Activated B cell treated with CpG ODN at 0.5 μM for 24 hours (primary cell): ENCODE measurements at regions of chr4 and their contacts with region 1.

Region 1: DNA sequence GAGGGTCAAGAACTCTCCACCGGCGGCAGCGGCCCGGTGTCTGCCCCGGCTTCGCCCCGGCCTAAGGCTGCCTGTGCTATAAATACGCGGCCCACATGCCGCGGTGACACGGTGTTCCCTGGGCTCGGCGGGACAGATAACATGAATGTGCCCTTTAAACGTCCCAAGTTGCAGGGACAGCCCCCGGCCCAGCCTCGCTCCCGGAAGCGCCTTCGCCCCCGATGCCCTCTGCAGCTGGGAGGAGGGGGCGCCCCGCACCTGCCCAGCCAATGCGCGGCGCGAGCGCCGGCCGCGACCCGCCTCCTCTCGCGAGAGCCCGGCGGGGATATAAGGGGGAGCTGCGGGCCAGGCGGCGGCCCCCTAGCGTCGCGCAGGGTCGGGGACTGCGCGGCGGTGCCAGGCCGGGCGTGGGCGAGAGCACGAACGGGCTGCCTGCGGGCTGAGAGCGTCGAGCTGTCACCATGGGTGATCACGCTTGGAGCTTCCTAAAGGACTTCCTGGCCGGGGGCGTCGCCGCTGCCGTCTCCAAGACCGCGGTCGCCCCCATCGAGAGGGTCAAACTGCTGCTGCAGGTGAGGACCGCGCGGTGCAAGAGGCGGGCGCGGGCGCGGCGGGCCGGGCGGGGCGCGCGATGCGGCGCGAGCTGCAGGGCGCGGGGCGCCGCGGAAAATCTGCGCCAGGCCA is at the start of gene SLC25A4:
- DNase-seq: peak; percentile 92
- ATAC-seq: peak; percentile 97
- H3K4me3 Mint-ChIP-seq: peak within 1 kb of the TSS; percentile 93
- H3K27ac Mint-ChIP-seq: peak within 1 kb of the TSS; percentile 94
- H3K4me1 Mint-ChIP-seq: peaks cover 13% of the 10 kb centered on the region
- H3K27me3 Mint-ChIP-seq: peaks cover 5% of the 10 kb centered on the region
- CTCF ChIP-seq: no peak
- total RNA-seq, gene SLC25A4: 8.9 and 9.4 TPM in 2 replicates

Region 2: GRCh38 chr4:183444214-183445066 is 1698.6 kb before region 1 on chr4 and contains the start of gene CDKN2AIP:
- CTCF ChIA-PET with region 1: no interaction called
- POLR2A ChIA-PET with region 1: interaction called, 5 read pairs
- intact Hi-C with region 1: loop called (anchors 1 kb)
- DNase-seq: peak; percentile 93
- ATAC-seq: peak; percentile 86
- H3K4me3 Mint-ChIP-seq: peak within 1 kb of the TSS; percentile 95
- H3K27ac Mint-ChIP-seq: peak within 1 kb of the TSS; percentile 95
- H3K4me1 Mint-ChIP-seq: peaks cover 36% of the 10 kb centered on the region
- H3K27me3 Mint-ChIP-seq: no peaks in the 10 kb centered on the region
- CTCF ChIP-seq: no peak
- total RNA-seq, gene CDKN2AIP: 19.9 and 21.8 TPM in 2 replicates

Region 3: DNA sequence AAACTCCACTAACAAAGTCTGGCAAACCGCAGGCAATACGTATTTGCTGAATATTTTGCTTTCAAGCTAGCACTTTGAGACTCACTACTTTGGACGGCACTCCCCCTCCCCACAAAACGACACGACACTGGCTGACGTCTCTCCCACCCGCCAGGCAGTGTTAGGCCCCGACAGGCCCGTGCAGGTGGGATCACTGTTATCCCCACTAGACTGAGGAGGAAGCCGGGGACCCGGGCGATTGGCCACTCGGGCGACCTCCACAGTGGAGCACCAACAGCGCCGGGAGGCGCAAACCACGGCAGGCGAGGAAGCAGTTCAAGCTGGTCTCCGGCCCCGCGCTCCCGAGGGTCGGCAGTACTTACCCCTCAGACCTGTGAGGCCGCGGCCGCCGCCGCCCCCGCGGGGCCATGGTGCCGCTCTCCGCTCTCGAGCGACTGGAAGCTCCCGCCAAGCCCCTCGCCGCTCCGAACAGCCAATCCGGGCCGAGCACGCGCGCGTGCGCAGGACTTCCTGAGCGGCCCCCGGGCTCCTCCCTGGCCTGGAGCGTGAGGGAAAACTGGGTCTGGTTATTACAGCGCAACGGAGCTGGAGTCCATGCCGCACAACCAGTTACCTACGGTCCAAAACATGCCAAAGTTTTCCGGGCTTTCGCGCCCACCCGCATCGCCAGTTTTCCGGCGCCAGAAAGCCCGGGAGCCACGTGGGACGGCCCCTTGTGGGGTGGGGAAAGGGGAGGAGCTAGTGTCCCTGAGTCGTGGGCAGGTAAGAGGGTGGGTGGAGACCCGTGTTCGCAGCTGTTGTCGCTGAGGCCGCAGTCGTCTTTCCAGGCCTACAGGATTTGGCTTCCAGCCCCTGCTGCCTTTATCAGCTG is 409.2 kb before region 1 on chr4 and contains the start of gene CENPU:
- CTCF ChIA-PET with region 1: no interaction called
- POLR2A ChIA-PET with region 1: interaction called, 6 read pairs
- intact Hi-C with region 1: loop called (anchors 5 kb)
- DNase-seq: peak; percentile 95
- ATAC-seq: peak; percentile 96
- H3K4me3 Mint-ChIP-seq: peak within 1 kb of the TSS; percentile 88
- H3K27ac Mint-ChIP-seq: peak within 1 kb of the TSS; percentile 85
- H3K4me1 Mint-ChIP-seq: peaks cover 19% of the 10 kb centered on the region
- H3K27me3 Mint-ChIP-seq: no peaks in the 10 kb centered on the region
- CTCF ChIP-seq: no peak
- total RNA-seq, gene CENPU: 7.0 and 7.1 TPM in 2 replicates

Region 4: GRCh38 chr4:185203486-185204237 is 60.6 kb after region 1 on chr4 and contains the start of gene CFAP97:
- CTCF ChIA-PET with region 1: no interaction called
- POLR2A ChIA-PET with region 1: interaction called, 4 read pairs
- intact Hi-C with region 1: loop called (anchors 1 kb)
- DNase-seq: peak; percentile 82
- ATAC-seq: peak; percentile 81
- H3K4me3 Mint-ChIP-seq: peak within 1 kb of the TSS; percentile 93
- H3K27ac Mint-ChIP-seq: peak within 1 kb of the TSS; percentile 97
- H3K4me1 Mint-ChIP-seq: peaks cover 47% of the 10 kb centered on the region
- H3K27me3 Mint-ChIP-seq: no peaks in the 10 kb centered on the region
- CTCF ChIP-seq: no peak
- total RNA-seq, gene CFAP97: 42.6 and 44.1 TPM in 2 replicates

Region 5: GRCh38 chr4:185290018-185290607 is 147.1 kb after region 1 on chr4:
- CTCF ChIA-PET with region 1: no interaction called
- POLR2A ChIA-PET with region 1: no interaction called
- intact Hi-C with region 1: no loop called
- DNase-seq: no peak
- ATAC-seq: no peak
- H3K4me3 Mint-ChIP-seq: no peak overlapping the region
- H3K27ac Mint-ChIP-seq: no peak overlapping the region
- H3K4me1 Mint-ChIP-seq: no peaks in the 10 kb centered on the region
- H3K27me3 Mint-ChIP-seq: no peaks in the 10 kb centered on the region
- CTCF ChIP-seq: no peak

Region 6: DNA sequence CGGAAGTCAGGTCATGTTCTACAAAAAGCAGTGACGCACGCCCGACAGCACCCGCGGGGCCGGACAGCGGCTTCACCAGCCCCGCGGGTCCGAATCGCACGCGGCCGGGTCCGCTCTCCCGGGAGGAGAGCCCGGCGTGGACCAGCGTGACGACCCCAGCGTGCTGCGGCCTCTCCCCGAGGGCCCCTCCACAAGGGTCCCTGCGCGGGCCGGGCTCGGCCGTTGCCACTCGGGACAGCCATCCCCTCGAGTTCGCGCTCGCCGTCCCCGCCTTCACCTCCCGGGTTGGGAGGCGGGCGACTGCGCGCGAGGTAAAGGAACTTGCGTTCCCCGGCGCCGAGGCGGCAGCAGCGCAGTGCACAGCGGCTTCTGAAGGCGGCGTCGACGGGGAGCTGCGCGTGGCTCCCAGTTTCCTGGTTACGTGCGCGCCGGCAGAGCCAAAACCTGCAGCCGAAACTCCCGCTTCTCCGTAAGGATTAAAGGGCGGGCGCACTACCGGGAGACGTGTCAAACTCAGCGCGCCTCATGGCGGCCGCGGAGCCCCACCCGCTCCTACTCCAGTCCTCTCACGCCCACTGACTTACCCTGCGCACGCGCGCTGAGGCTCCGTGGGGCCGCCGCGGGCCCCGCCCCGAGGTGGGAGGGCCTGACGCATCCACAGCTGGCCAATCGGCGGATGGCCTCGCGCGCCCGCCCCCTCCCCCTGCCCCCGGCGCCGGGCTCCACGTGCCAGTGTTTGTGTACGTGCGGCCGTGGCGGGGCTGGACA is 253.1 kb after region 1 on chr4:
- CTCF ChIA-PET with region 1: no interaction called
- POLR2A ChIA-PET with region 1: interaction called, 10 read pairs
- intact Hi-C with region 1: loop called (anchors 1 kb)
- DNase-seq: peak; percentile 98
- ATAC-seq: peak; percentile 89
- H3K4me3 Mint-ChIP-seq: peak overlapping the region; percentile 94
- H3K27ac Mint-ChIP-seq: peak overlapping the region; percentile 94
- H3K4me1 Mint-ChIP-seq: peaks cover 63% of the 10 kb centered on the region
- H3K27me3 Mint-ChIP-seq: no peaks in the 10 kb centered on the region
- CTCF ChIP-seq: no peak

Region 7: DNA sequence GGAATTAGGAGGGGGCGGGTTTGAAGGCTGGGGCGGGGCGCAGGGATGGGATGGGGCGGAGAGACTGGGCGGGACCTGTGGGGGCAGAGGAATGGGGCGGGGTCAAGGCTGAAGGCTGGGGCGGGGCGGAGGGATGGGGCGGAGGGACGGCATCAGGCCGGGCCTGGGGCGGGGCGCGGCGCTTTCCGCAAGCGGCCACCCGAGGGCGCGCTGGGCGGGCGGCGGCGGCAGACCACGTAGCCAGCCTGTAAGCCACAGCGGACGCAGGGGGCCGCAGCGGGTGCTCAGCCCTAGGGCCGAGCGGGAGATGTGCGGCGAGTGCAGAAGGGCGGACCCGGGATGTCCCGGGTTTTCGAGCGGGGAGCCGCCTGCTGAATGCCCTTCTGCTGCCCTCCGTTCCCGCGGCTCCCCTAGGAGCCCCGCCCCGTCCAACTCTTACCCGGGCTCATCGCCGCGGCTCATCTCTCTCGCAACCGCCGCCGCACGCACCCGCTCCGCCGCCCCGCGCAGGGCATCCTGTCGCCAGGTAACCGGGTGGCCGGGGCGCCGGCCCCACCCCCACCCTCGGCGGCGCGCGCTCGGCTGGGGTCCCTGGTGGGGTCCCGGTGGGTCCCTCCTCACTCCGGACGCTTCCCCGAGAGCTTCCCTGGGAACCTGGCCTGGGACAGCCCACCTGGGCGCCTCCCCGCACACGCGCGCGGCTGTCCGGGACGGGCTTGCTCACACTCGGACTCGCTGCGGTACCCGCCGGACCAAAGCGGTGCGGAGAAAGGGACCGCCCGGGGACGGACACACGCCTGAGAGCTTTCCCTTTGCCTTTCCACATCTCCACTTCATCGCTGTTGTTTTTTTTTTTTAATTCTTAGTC is 328.4 kb after region 1 on chr4 and contains the start of gene CCDC110:
- CTCF ChIA-PET with region 1: no interaction called
- POLR2A ChIA-PET with region 1: no interaction called
- intact Hi-C with region 1: loop called (anchors 1 kb)
- DNase-seq: peak; percentile 87
- ATAC-seq: peak; percentile 95
- H3K4me3 Mint-ChIP-seq: peak within 1 kb of the TSS; percentile 88
- H3K27ac Mint-ChIP-seq: peak within 1 kb of the TSS; percentile 80
- H3K4me1 Mint-ChIP-seq: peaks cover 18% of the 10 kb centered on the region
- H3K27me3 Mint-ChIP-seq: no peaks in the 10 kb centered on the region
- CTCF ChIP-seq: no peak
- total RNA-seq, gene CCDC110: 0.33 and 0.71 TPM in 2 replicates

Region 8: DNA sequence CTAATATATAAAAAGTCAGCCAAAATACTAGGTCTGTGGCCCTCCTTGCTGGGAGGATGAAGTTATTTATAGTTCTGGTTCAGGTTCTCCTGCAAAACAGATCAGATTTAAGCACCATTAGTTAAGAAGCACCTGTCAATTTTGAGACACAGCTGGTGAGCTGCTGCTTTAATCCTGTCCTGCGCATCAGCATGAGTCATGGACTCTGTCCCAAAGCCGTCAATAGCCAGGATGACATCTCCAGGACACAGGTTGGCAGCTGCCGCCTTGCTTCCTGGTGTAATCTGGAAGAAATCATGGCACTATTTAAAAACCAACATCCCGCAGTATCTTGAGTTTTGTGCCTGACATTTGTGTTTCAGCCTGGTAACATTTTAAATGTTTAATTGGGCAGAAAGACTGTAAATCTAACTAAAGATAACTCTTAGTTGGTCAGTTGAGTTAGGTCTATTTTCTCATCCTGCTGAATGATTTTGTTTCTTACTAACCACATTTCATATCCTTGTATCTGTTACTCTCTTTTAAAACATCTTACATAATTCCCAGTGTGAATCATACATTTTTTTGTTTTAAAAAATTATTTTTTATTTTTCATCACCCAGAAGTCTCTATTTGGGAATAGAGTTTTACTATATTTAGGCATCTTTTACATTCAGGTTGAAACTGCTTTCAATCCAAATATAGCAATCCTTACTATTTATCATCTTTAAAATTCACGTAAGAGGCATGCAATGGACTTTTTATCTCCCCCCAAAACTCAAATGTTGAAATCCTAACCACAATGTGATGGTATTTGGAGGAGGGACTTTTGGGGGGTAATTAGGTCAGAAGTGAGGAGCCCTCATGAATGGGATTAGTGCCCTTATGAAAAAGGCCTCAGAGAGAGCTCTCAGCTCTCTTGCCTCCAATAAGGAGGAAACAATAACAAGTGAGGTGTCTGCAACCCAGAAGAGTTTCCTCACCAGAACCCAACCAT is 382.1 kb after region 1 on chr4:
- CTCF ChIA-PET with region 1: no interaction called
- POLR2A ChIA-PET with region 1: no interaction called
- intact Hi-C with region 1: no loop called
- DNase-seq: no peak
- ATAC-seq: no peak
- H3K4me3 Mint-ChIP-seq: no peak overlapping the region
- H3K27ac Mint-ChIP-seq: no peak overlapping the region
- H3K4me1 Mint-ChIP-seq: no peaks in the 10 kb centered on the region
- H3K27me3 Mint-ChIP-seq: peaks cover 28% of the 10 kb centered on the region
- CTCF ChIP-seq: no peak

Region 9: DNA sequence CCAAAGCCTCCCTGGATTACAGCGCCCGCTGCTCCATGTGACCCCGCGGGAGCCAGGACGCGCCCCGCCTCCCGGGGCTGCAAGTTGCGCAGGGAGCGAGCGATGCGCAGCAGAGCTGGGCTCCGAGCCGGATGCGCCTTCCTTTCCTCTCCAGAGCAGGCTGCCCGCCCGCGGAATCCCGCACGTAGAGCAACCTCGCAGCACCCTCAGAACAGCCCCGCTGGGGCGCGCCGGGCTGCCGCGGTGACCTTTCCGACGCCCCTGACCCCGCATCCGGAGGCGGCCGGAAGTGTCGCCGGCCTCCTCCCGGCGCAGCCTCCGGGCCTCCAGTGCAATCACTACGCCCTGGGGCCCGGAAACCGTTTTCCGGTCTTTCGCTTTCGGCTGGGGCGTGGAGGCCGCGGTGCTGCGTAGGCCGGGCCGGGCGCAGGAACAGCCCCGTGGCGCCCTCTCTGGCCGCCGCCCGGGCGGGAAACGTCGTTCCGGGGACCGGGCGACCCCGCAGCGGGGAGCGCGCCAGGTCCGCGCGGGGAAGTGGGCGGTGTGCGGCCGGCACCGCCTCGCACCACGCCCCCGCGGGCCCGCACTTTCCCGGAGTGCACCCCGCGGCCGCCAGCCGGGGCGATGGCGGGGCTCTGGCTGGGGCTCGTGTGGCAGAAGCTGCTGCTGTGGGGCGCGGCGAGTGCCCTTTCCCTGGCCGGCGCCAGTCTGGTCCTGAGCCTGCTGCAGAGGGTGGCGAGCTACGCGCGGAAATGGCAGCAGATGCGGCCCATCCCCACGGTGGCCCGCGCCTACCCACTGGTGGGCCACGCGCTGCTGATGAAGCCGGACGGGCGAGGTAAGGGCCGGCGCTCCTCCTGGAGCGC is 1048.4 kb after region 1 on chr4 and contains the start of gene CYP4V2:
- CTCF ChIA-PET with region 1: no interaction called
- POLR2A ChIA-PET with region 1: no interaction called
- intact Hi-C with region 1: loop called (anchors 5 kb)
- DNase-seq: peak; percentile 84
- ATAC-seq: peak; percentile 86
- H3K4me3 Mint-ChIP-seq: peak within 1 kb of the TSS; percentile 90
- H3K27ac Mint-ChIP-seq: peak within 1 kb of the TSS; percentile 88
- H3K4me1 Mint-ChIP-seq: peaks cover 26% of the 10 kb centered on the region
- H3K27me3 Mint-ChIP-seq: peaks cover 2% of the 10 kb centered on the region
- CTCF ChIP-seq: no peak
- total RNA-seq, gene CYP4V2: 7.7 and 9.5 TPM in 2 replicates